Cardiac septum (tissue), 1 donor: ENCODE measurements at regions of chr10 and their contacts with region 1.

Region 1: GRCh38 chr10:60208676-60209269 is 180.9 kb downstream of the ANK3 start:
- DNase-seq: no peak

Region 2: GRCh38 chr10:60099998-60100747 is 108.6 kb before region 1 on chr10:
- intact Hi-C with region 1: loop called (anchors 5 kb)
- DNase-seq: no peak

Region 3: DNA sequence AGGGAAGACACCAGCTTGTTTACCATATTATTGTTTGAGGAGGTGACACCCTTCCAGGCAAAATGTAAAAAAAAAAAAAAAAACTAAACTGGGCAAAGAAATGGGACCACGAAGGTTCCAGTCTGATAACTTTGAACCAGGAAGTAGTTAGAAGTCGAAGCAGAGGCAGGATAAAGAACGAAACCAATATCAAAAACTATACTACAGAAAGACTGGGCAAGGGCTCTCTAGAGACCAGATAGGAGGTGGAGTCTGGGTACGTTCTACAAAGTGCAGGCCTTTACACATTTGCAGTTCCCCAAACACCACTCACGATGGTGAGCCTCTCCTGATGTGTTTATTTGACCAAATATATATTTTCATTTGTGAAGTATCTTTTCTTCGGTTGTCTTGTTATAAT is 443.9 kb after region 1 on chr10:
- intact Hi-C with region 1: no loop called
- DNase-seq: no peak